ENCODE measurements at regions of chr15 and their contacts with region 1.

Region 1: GRCh38 chr15:73273181-73274002 is 95.4 kb downstream of the HCN4 start:
- DNase-seq: peak; percentile 16
- H3K4me3 ChIP-seq: no peak overlapping the region
- H3K27ac ChIP-seq: no peak overlapping the region
- H3K27me3 ChIP-seq: no peaks in the 10 kb centered on the region
- CTCF ChIP-seq: peak; percentile 82

Region 2: DNA sequence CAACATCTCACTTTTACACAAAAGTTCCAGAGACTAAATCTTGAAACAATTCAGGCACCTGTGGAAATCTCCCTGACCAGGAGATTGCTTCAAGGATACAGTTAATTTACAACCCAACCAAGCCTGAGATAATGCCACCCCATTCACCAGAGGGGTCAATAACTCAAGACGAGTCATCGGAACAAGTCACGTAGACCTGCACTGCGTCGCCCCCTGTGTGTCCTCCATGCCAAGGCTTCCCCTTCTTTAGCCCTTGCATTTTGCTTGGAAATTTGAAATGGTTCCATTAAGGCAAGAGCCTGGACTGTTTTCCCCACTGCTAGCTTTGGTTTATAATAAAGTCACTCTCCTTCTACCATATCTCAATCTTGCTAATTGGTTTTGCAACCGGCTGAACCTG is 350.1 kb before region 1 on chr15:
- CTCF ChIA-PET with region 1: no interaction called
- POLR2A ChIA-PET with region 1: no interaction called
- DNase-seq: no peak
- H3K4me3 ChIP-seq: no peak overlapping the region
- H3K27ac ChIP-seq: no peak overlapping the region
- H3K27me3 ChIP-seq: no peaks in the 10 kb centered on the region
- CTCF ChIP-seq: no peak

Region 3: DNA sequence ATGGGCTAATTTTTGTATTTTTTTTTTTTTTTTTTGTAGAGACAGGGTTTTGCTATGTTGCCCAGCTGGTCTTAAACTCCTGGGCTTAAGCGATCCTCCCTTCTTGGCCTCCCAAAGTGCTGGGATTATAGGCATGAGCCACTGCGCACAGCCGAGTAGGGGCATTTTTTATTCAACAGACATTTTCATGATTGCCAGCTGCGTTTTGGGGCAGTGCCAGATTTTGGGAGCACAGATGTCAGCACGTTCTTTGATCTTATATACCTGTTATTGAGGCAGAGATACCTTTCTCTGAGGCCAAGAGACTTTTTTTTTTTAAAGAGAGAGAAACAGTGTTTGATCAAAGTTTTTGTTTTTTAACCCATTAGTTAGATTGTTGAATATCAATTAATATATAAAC is 204.3 kb before region 1 on chr15:
- CTCF ChIA-PET with region 1: no interaction called
- POLR2A ChIA-PET with region 1: no interaction called
- DNase-seq: no peak
- H3K4me3 ChIP-seq: no peak overlapping the region
- H3K27ac ChIP-seq: no peak overlapping the region
- H3K27me3 ChIP-seq: no peaks in the 10 kb centered on the region
- CTCF ChIP-seq: no peak

Region 4: DNA sequence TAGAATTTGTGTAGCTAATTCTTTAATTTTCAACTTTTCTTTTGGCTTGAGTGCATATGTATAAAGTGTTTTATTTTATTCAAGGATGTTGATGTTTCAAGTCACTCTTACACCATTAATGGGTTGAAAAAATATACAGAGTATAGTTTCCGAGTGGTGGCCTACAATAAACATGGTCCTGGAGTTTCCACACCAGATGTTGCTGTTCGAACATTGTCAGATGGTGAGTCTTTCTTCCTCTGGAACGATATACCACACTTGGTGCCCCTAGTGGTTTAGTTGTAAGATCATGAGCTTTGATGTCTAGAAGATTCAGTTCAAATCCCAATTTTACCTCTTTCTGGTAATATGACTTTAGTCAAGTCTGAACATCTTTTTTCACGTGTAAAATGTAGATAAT is 23.9 kb before region 1 on chr15:
- CTCF ChIA-PET with region 1: interaction called, 161 read pairs
- POLR2A ChIA-PET with region 1: no interaction called
- DNase-seq: no peak
- H3K4me3 ChIP-seq: no peak overlapping the region
- H3K27ac ChIP-seq: no peak overlapping the region
- H3K27me3 ChIP-seq: no peaks in the 10 kb centered on the region
- CTCF ChIP-seq: no peak

Region 5: GRCh38 chr15:73284090-73284716 is 10.8 kb after region 1 on chr15:
- CTCF ChIA-PET with region 1: interaction called, 24 read pairs
- POLR2A ChIA-PET with region 1: no interaction called
- DNase-seq: no peak
- H3K4me3 ChIP-seq: no peak overlapping the region
- H3K27ac ChIP-seq: no peak overlapping the region
- H3K27me3 ChIP-seq: peaks cover 3% of the 10 kb centered on the region
- CTCF ChIP-seq: peak; percentile 41

Region 6: GRCh38 chr15:73403171-73403570 is 129.8 kb after region 1 on chr15:
- CTCF ChIA-PET with region 1: no interaction called
- POLR2A ChIA-PET with region 1: no interaction called
- DNase-seq: no peak
- H3K4me3 ChIP-seq: no peak overlapping the region
- H3K27ac ChIP-seq: no peak overlapping the region
- H3K27me3 ChIP-seq: peaks cover 2% of the 10 kb centered on the region
- CTCF ChIP-seq: no peak

Measured in AG04450 (cell line).